Sigmoid colon (tissue), 7 donors: ENCODE measurements at regions of chr2 and their contacts with region 1.

Region 1: GRCh38 chr2:113818382-113818951 is 62.0 kb upstream of the SLC35F5 start:
- DNase-seq: peak; percentile 86
- H3K4me3 ChIP-seq: peak overlapping the region in 2 of 4 donors; percentile 2 to 6
- H3K27ac ChIP-seq: peak overlapping the region; percentile 68 to 81 (median 70)
- H3K4me1 ChIP-seq: peaks cover 0 to 16% (median 14%) of the 10 kb centered on the region in 4 donors
- H3K27me3 ChIP-seq: no peaks in the 10 kb centered on the region
- CTCF ChIP-seq: no peak
- EP300 ChIP-seq: peak in 1 of 4 donors; percentile 38
- POLR2A ChIP-seq: no peak

Region 2: DNA sequence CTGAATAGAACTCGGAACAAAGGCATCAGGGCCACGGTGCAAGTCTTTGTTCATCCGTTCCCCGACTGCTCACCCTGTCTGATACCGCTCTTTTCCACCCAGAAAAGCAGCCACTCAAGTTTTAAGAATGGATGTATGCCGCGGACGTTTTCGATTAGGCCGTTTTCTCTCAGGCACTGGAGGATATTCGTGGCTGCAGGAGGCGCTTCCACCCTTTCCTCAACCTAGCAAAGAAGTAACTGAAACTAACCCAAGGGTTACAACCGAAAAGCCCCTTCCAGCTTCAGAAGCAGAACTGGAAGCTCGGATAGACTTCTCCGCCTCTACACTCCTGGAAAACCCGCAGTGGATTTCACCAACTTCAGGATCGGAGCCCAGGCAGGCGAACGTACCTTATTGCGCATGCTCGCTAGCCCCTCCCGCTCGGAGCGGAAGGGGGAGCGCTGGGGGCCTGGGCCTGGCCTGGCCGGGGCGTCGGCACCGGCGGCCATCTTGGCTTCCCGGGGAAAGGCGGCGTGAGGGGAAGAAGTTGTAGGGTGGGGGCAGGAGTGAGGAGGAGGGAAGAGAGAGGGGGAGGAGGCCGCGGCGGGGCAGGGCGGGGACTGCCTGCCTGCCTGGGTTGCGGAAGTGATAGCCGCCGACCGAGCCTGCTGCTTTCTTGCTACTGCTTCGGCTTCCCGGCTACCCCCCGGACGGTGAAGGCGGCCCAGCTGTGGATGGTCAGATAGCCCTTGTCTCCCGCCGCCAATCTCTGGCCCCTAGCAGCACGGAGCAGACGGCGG is 71.2 kb after region 1 on chr2 and contains the start of gene ACTR3:
- intact Hi-C with region 1: loop called (anchors 2 kb)
- DNase-seq: peak; percentile 98
- H3K4me3 ChIP-seq: peak within 1 kb of the TSS; percentile 69 to 98 (median 90)
- H3K27ac ChIP-seq: peak within 1 kb of the TSS; percentile 94 to 99 (median 98)
- H3K4me1 ChIP-seq: peaks cover 0 to 59% (median 48%) of the 10 kb centered on the region in 4 donors
- H3K27me3 ChIP-seq: no peaks in the 10 kb centered on the region
- CTCF ChIP-seq: no peak
- EP300 ChIP-seq: peak in 1 of 4 donors; percentile 44
- POLR2A ChIP-seq: peak; percentile 69 to 85
- total RNA-seq, gene ACTR3: 129 to 171 (median 142) TPM

Region 3: DNA sequence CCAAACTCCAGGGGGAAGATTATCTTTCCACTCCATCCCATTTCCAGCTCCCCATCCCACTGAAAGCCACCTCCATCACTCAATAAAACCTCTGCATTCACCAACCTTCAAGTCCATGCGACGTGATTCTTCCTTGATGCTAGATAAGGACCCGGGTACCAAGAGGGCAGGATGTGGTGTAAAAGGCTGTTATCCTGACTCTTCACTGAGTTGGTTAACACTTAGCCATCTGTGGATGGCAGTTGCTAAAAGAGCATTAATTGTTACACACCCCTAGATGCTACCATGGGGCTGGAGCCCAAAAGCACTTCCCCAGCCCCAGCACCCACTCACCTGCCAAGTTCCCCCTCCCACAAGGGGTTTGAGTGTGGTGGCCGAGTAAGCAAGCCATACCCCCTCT is 570.6 kb after region 1 on chr2:
- intact Hi-C with region 1: no loop called
- DNase-seq: no peak
- H3K4me3 ChIP-seq: no peak overlapping the region
- H3K27ac ChIP-seq: no peak overlapping the region
- H3K4me1 ChIP-seq: no peaks in the 10 kb centered on the region
- H3K27me3 ChIP-seq: no peaks in the 10 kb centered on the region
- CTCF ChIP-seq: no peak
- EP300 ChIP-seq: no peak
- POLR2A ChIP-seq: no peak